ENCODE measurements at regions of chr10 and their contacts with region 1.

Region 1: GRCh38 chr10:117496616-117497028 is 45.9 kb upstream of the EMX2 start:
- DNase-seq: peak; percentile 38 to 63 (median 55)
- H3K4me3 ChIP-seq: no peak overlapping the region
- H3K4me3 Mint-ChIP-seq: peak overlapping the region in 1 of 8 donors; percentile 32
- H3K27ac ChIP-seq: no peak overlapping the region
- H3K27ac Mint-ChIP-seq: no peak overlapping the region
- H3K4me1 ChIP-seq: no peaks in the 10 kb centered on the region
- H3K4me1 Mint-ChIP-seq: peaks cover 0 to 4% (median 2%) of the 10 kb centered on the region in 4 donors
- H3K27me3 ChIP-seq: peaks cover 8% of the 10 kb centered on the region
- H3K27me3 Mint-ChIP-seq: peaks cover 13 to 16% of the 10 kb centered on the region in 2 donors

Region 2: GRCh38 chr10:117360994-117361667 is 135.5 kb before region 1 on chr10:
- CTCF ChIA-PET with region 1: no interaction called
- POLR2A ChIA-PET with region 1: no interaction called
- intact Hi-C with region 1: no loop called
- DNase-seq: no peak
- H3K4me3 ChIP-seq: no peak overlapping the region
- H3K4me3 Mint-ChIP-seq: peak overlapping the region in 1 of 8 donors; percentile 22
- H3K27ac ChIP-seq: no peak overlapping the region
- H3K27ac Mint-ChIP-seq: peak overlapping the region in 1 of 7 donors; percentile 17
- H3K4me1 ChIP-seq: peaks cover 48% of the 10 kb centered on the region
- H3K4me1 Mint-ChIP-seq: peaks cover 25 to 48% (median 36%) of the 10 kb centered on the region in 4 donors
- H3K27me3 ChIP-seq: no peaks in the 10 kb centered on the region
- H3K27me3 Mint-ChIP-seq: no peaks in the 10 kb centered on the region

Region 3: GRCh38 chr10:117471344-117471874 is 25.2 kb before region 1 on chr10:
- CTCF ChIA-PET with region 1: no interaction called
- POLR2A ChIA-PET with region 1: no interaction called
- intact Hi-C with region 1: no loop called
- DNase-seq: no peak
- H3K4me3 ChIP-seq: no peak overlapping the region
- H3K4me3 Mint-ChIP-seq: no peak overlapping the region
- H3K27ac ChIP-seq: no peak overlapping the region
- H3K27ac Mint-ChIP-seq: no peak overlapping the region
- H3K4me1 ChIP-seq: no peaks in the 10 kb centered on the region
- H3K4me1 Mint-ChIP-seq: no peaks in the 10 kb centered on the region
- H3K27me3 ChIP-seq: no peaks in the 10 kb centered on the region
- H3K27me3 Mint-ChIP-seq: peaks cover 5 to 19% of the 10 kb centered on the region in 2 donors

Region 4: DNA sequence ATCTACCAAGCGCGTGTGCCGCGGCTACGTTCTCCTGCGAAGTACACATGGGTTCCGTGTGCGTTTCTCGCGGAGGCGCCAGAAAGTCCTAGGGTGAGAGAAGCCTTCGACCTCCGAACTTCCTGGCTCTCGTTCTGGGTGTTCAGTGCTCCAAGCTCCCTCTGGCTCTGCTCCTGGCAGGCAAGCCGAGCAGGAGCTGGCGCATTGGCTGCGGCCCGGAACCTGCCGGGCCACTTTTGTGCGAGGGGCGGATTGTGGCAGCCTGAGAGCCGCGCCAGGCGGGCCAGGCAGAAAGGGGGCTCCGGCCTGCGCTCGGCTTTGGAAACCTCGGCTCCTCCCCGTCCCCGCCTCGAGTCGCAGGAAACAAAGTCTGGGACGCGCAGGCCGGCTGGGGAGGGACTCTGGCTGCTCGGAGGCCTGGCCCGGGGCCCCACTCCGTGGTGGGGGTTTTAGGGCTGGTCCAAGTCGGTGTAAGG is 55.6 kb after region 1 on chr10:
- CTCF ChIA-PET with region 1: no interaction called
- POLR2A ChIA-PET with region 1: no interaction called
- intact Hi-C with region 1: no loop called
- DNase-seq: no peak
- H3K4me3 ChIP-seq: no peak overlapping the region
- H3K4me3 Mint-ChIP-seq: no peak overlapping the region
- H3K27ac ChIP-seq: no peak overlapping the region
- H3K27ac Mint-ChIP-seq: no peak overlapping the region
- H3K4me1 ChIP-seq: peaks cover 7% of the 10 kb centered on the region
- H3K4me1 Mint-ChIP-seq: peaks cover 9 to 25% (median 11%) of the 10 kb centered on the region in 4 donors
- H3K27me3 ChIP-seq: peaks cover 37% of the 10 kb centered on the region
- H3K27me3 Mint-ChIP-seq: peaks cover 54 to 62% of the 10 kb centered on the region in 2 donors

Region 5: DNA sequence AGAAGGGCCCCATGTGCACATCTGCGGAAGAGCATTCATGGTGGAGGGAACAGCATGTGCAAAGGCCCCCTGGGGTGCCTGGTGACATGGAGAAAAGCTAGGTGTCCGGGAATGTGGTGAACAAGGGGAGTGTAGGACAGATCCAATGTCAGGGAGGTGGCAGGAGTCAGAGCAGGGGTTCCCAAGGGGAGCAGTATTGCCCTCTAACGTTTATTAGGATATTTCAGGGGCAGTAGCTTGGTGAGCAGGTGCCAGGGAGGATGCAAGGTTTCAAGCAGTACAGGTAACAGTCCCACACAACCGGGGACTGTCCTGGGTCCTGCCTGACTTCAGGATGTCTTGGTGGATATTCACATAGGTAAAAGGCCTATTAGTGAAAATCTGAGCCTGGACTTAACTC is 255.5 kb after region 1 on chr10:
- CTCF ChIA-PET with region 1: no interaction called
- POLR2A ChIA-PET with region 1: no interaction called
- intact Hi-C with region 1: no loop called
- DNase-seq: no peak
- H3K4me3 ChIP-seq: no peak overlapping the region
- H3K4me3 Mint-ChIP-seq: no peak overlapping the region
- H3K27ac ChIP-seq: no peak overlapping the region
- H3K27ac Mint-ChIP-seq: no peak overlapping the region
- H3K4me1 ChIP-seq: no peaks in the 10 kb centered on the region
- H3K4me1 Mint-ChIP-seq: no peaks in the 10 kb centered on the region
- H3K27me3 ChIP-seq: no peaks in the 10 kb centered on the region
- H3K27me3 Mint-ChIP-seq: peaks cover 0 to 1% of the 10 kb centered on the region in 2 donors

Region 6: DNA sequence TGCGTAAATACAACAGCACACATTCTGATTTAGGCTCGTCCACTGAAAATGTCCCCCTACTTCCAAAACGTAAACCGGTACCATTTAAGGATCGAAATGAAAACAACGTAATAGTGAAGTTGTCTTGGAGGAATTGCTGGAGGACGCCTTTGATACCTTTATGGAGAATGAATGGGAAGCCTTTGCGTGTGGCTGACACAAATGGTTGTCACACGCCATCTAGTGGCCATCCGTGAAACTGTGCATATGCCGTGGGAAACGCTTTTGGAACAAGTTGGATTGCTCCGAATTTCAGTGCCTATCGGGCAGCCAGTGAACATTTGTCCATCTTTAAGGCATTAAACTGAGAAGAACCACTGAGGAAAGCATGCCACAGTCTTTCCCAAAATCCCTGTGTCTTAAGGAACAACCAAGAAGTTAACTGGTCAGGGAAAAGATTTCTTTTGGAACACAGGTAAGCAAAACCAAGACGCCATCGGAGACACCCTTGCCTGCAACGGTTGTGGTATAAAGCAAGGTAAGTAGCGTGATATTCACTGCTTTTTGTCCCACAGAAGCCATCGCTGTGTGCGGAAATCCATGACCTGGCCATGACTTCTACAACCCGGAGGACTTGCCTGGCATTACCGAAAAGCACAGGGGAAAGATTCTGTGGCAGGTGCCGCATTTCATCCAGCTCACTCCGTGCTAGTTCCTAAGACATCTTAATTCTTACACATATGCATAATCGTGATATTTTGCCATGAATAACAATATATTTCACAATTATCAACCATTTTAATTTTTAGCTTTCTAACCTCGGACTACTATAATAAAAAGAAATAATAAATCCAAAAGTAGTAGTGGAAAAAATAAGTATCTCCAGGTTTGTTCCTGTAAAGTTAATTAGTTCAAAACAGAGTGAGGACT is 744.9 kb after region 1 on chr10:
- CTCF ChIA-PET with region 1: interaction called, 205 read pairs
- POLR2A ChIA-PET with region 1: no interaction called
- intact Hi-C with region 1: loop called (anchors 1 kb)
- DNase-seq: peak in 4 of 5 donors; percentile 32 to 55 (median 46)
- H3K4me3 ChIP-seq: no peak overlapping the region
- H3K4me3 Mint-ChIP-seq: no peak overlapping the region
- H3K27ac ChIP-seq: no peak overlapping the region
- H3K27ac Mint-ChIP-seq: no peak overlapping the region
- H3K4me1 ChIP-seq: no peaks in the 10 kb centered on the region
- H3K4me1 Mint-ChIP-seq: peaks cover 0 to 1% (median 0%) of the 10 kb centered on the region in 4 donors
- H3K27me3 ChIP-seq: peaks cover 10% of the 10 kb centered on the region
- H3K27me3 Mint-ChIP-seq: peaks cover 30 to 40% of the 10 kb centered on the region in 2 donors

Region 7: GRCh38 chr10:118423800-118424479 is 927.3 kb after region 1 on chr10:
- CTCF ChIA-PET with region 1: interaction called, 10 read pairs
- POLR2A ChIA-PET with region 1: no interaction called
- intact Hi-C with region 1: no loop called
- DNase-seq: peak; percentile 38 to 55 (median 43)
- H3K4me3 ChIP-seq: no peak overlapping the region
- H3K4me3 Mint-ChIP-seq: no peak overlapping the region
- H3K27ac ChIP-seq: no peak overlapping the region
- H3K27ac Mint-ChIP-seq: peak overlapping the region in 1 of 7 donors; percentile 4
- H3K4me1 ChIP-seq: no peaks in the 10 kb centered on the region
- H3K4me1 Mint-ChIP-seq: peaks cover 0 to 4% (median 0%) of the 10 kb centered on the region in 4 donors
- H3K27me3 ChIP-seq: no peaks in the 10 kb centered on the region
- H3K27me3 Mint-ChIP-seq: peaks cover 6% of the 10 kb centered on the region in 2 donors

Measured in CD4-positive, alpha-beta memory T cell (primary cell).